ENCODE measurements at regions of chr20 and their contacts with region 1.

Region 1: GRCh38 chr20:63537525-63538203 is 488 bp upstream of the PTK6 start:
- DNase-seq: peak; percentile 97
- ATAC-seq: peak; percentile 85
- H3K4me3 ChIP-seq: peak overlapping the region in 4 of 5 experiments; percentile 55 to 67 (median 58)
- H3K4me3 Mint-ChIP-seq: peak overlapping the region; percentile 86
- H3K27ac ChIP-seq: peak overlapping the region; percentile 83 to 86
- H3K27ac Mint-ChIP-seq: peak overlapping the region; percentile 92
- H3K4me1 ChIP-seq: peaks cover 30 to 45% of the 10 kb centered on the region in 2 donors
- H3K4me1 Mint-ChIP-seq: peaks cover 34% of the 10 kb centered on the region
- H3K27me3 ChIP-seq: no peaks in the 10 kb centered on the region
- H3K27me3 Mint-ChIP-seq: no peaks in the 10 kb centered on the region
- CTCF ChIP-seq: peak; percentile 99

Region 2: DNA sequence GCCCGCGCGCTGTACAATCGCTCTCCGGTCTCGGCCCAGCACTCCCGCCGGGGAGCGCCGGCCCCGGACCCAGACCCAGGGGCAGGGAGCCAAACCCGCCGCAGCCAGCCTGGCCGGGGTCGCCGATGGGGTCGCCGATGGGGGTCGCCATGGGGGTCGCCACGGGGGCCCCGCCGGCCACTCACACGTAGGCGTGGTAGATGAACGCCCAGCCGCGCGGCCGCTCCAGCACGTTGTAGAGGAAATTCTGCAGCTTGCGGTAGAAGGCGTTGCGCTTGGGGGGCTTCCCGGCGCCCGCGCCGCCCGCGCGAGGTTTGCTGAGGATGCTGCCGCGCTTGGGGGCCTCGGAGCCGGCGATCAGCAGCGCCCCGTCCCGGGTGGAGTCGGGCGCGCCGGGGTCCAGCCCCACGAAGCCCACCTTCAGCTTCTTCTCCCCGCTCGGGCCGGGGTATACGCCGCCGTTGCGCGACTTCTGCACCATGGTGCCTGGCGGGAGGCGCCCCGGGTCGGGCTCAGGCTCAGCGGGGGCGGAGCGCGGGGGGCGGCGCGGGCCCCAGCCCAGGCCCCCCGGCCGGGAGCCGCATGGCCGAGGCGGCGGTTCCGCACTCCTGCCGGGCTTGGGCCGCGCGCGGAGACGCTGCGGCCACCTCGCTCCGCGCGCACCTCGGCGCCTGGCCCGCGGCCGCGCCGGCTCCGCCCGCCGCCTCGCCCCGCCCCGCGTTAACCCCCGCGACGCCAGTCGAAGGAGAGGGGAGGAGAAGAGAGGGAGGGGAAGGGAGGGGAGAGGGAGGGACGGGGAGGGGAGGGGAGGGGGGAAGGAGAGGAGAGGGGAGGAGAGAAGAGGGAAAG is 65.5 kb before region 1 on chr20 and contains the start of gene KCNQ2:
- CTCF ChIA-PET with region 1: no interaction called
- POLR2A ChIA-PET with region 1: no interaction called
- intact Hi-C with region 1: no loop called
- DNase-seq: peak; percentile 38
- ATAC-seq: no peak
- H3K4me3 ChIP-seq: peak within 1 kb of the TSS in 2 of 5 experiments; percentile 9 to 31
- H3K4me3 Mint-ChIP-seq: peak within 1 kb of the TSS; percentile 34
- H3K27ac ChIP-seq: no peak within 1 kb of the TSS
- H3K27ac Mint-ChIP-seq: no peak within 1 kb of the TSS
- H3K4me1 ChIP-seq: peaks cover 4 to 6% of the 10 kb centered on the region in 2 donors
- H3K4me1 Mint-ChIP-seq: peaks cover 7% of the 10 kb centered on the region
- H3K27me3 ChIP-seq: peaks cover 0 to 58% (median 15%) of the 10 kb centered on the region in 4 experiments
- H3K27me3 Mint-ChIP-seq: peaks cover 37% of the 10 kb centered on the region
- CTCF ChIP-seq: no peak
- total RNA-seq, gene KCNQ2: 0.12 and 0.49 TPM in 2 replicates

Region 3: GRCh38 chr20:63495741-63496595 is 41.7 kb before region 1 on chr20:
- CTCF ChIA-PET with region 1: interaction called, 24 read pairs
- POLR2A ChIA-PET with region 1: no interaction called
- intact Hi-C with region 1: no loop called
- DNase-seq: peak; percentile 84
- ATAC-seq: peak; percentile 66
- H3K4me3 ChIP-seq: peak overlapping the region in 4 of 5 experiments; percentile 8 to 40 (median 34)
- H3K4me3 Mint-ChIP-seq: peak overlapping the region; percentile 79
- H3K27ac ChIP-seq: no peak overlapping the region
- H3K27ac Mint-ChIP-seq: no peak overlapping the region
- H3K4me1 ChIP-seq: peaks cover 19 to 26% of the 10 kb centered on the region in 2 donors
- H3K4me1 Mint-ChIP-seq: peaks cover 7% of the 10 kb centered on the region
- H3K27me3 ChIP-seq: peaks cover 0 to 40% (median 16%) of the 10 kb centered on the region in 4 experiments
- H3K27me3 Mint-ChIP-seq: peaks cover 11% of the 10 kb centered on the region
- CTCF ChIP-seq: peak; percentile 95

Region 4: GRCh38 chr20:63567386-63568169 is 29.9 kb after region 1 on chr20:
- CTCF ChIA-PET with region 1: interaction called, 17 read pairs
- POLR2A ChIA-PET with region 1: interaction called, 10 read pairs
- intact Hi-C with region 1: no loop called
- DNase-seq: peak; percentile 82
- ATAC-seq: peak; percentile 73
- H3K4me3 ChIP-seq: peak overlapping the region in 4 of 5 experiments; percentile 44 to 64 (median 49)
- H3K4me3 Mint-ChIP-seq: peak overlapping the region; percentile 88
- H3K27ac ChIP-seq: peak overlapping the region; percentile 46 to 65
- H3K27ac Mint-ChIP-seq: peak overlapping the region; percentile 83
- H3K4me1 ChIP-seq: peaks cover 34 to 48% of the 10 kb centered on the region in 2 donors
- H3K4me1 Mint-ChIP-seq: peaks cover 29% of the 10 kb centered on the region
- H3K27me3 ChIP-seq: no peaks in the 10 kb centered on the region
- H3K27me3 Mint-ChIP-seq: no peaks in the 10 kb centered on the region
- CTCF ChIP-seq: no peak

Region 5: GRCh38 chr20:63641792-63642544 is 104.3 kb after region 1 on chr20:
- CTCF ChIA-PET with region 1: interaction called, 30 read pairs
- POLR2A ChIA-PET with region 1: interaction called, 12 read pairs
- intact Hi-C with region 1: no loop called
- DNase-seq: peak; percentile 96
- ATAC-seq: peak; percentile 72
- H3K4me3 ChIP-seq: peak overlapping the region in 4 of 5 experiments; percentile 84 to 97 (median 90)
- H3K4me3 Mint-ChIP-seq: peak overlapping the region; percentile 82
- H3K27ac ChIP-seq: peak overlapping the region; percentile 91
- H3K27ac Mint-ChIP-seq: peak overlapping the region; percentile 97
- H3K4me1 ChIP-seq: peaks cover 23 to 41% of the 10 kb centered on the region in 2 donors
- H3K4me1 Mint-ChIP-seq: peaks cover 28% of the 10 kb centered on the region
- H3K27me3 ChIP-seq: no peaks in the 10 kb centered on the region
- H3K27me3 Mint-ChIP-seq: peaks cover 4% of the 10 kb centered on the region
- CTCF ChIP-seq: peak; percentile 67

Region 6: DNA sequence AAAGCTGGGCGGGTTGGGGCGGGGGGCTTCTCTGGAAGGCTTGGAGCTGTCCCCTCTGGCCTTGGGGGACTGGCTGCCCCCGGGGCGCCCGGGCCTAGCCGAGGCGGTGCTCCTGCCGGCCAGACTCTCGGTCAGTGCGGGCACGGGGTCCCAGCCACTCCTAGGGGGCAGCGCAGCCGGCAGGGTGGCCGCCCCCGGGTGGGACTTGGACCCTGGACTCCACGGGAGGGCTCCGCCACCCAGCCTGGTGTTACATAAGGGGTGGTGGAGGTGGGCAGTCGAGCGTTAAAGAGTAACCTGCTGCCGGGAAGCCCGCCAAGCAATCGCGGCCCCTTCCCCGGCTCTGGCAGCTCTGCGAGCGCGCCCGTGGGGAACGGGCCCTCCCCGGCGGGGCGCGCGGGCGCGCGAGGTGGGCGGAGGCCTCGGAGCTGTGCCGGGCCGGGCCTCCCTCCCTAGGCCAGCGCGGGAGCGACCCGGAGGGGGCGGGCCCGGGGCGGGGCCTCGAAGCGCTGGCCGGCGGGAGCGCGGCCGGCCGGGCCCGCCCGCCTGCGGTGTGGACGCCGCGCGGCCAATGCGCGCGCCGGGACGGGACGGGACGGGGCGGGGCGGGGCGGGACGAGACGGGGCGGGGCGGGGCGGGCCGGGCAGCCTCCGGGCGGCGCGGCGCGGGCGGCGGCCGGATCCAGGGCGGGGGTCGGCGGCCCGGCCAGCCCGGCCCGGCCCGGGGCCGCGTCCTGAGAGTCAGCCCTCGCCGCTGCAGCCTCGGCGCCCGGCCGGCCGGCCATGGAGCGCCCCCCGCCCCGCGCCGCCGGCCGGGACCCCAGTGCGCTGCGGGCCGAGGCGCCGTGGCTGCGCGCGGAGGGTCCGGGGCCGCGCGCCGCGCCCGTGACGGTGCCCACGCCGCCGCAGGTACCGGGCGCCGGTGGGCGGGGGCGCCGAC is 201.7 kb after region 1 on chr20 and contains the start of gene SLC2A4RG:
- CTCF ChIA-PET with region 1: interaction called, 4 read pairs
- POLR2A ChIA-PET with region 1: interaction called, 3 read pairs
- intact Hi-C with region 1: loop called (anchors 5 kb)
- DNase-seq: peak; percentile 79
- ATAC-seq: peak; percentile 71
- H3K4me3 ChIP-seq: peak within 1 kb of the TSS; percentile 23 to 64 (median 50)
- H3K4me3 Mint-ChIP-seq: peak within 1 kb of the TSS; percentile 80
- H3K27ac ChIP-seq: no peak within 1 kb of the TSS
- H3K27ac Mint-ChIP-seq: no peak within 1 kb of the TSS
- H3K4me1 ChIP-seq: peaks cover 35 to 46% of the 10 kb centered on the region in 2 donors
- H3K4me1 Mint-ChIP-seq: peaks cover 18% of the 10 kb centered on the region
- H3K27me3 ChIP-seq: no peaks in the 10 kb centered on the region
- H3K27me3 Mint-ChIP-seq: no peaks in the 10 kb centered on the region
- CTCF ChIP-seq: no peak
- total RNA-seq, gene SLC2A4RG: 49.4 and 50.8 TPM in 2 replicates

Region 7: GRCh38 chr20:63955827-63956663 is 418.4 kb after region 1 on chr20 and contains the start of gene UCKL1:
- CTCF ChIA-PET with region 1: interaction called, 3 read pairs
- POLR2A ChIA-PET with region 1: interaction called, 5 read pairs
- intact Hi-C with region 1: loop called (anchors 5 kb)
- DNase-seq: peak; percentile 91
- ATAC-seq: peak; percentile 76
- H3K4me3 ChIP-seq: peak within 1 kb of the TSS; percentile 36 to 91 (median 84)
- H3K4me3 Mint-ChIP-seq: peak within 1 kb of the TSS; percentile 90
- H3K27ac ChIP-seq: peak within 1 kb of the TSS; percentile 57 to 85
- H3K27ac Mint-ChIP-seq: peak within 1 kb of the TSS; percentile 90
- H3K4me1 ChIP-seq: peaks cover 39 to 49% of the 10 kb centered on the region in 2 donors
- H3K4me1 Mint-ChIP-seq: peaks cover 37% of the 10 kb centered on the region
- H3K27me3 ChIP-seq: no peaks in the 10 kb centered on the region
- H3K27me3 Mint-ChIP-seq: no peaks in the 10 kb centered on the region
- CTCF ChIP-seq: no peak
- total RNA-seq, gene UCKL1: 104 and 106 TPM in 2 replicates

Measured in B cell (primary cell).